AG04449 (cell line): ENCODE measurements at regions of chr10 and their contacts with region 1.

Region 1: GRCh38 chr10:60769406-60769805 is 8.9 kb upstream of the CDK1 start:
- DNase-seq: no peak
- H3K4me3 ChIP-seq: no peak overlapping the region
- CTCF ChIP-seq: no peak

Region 2: DNA sequence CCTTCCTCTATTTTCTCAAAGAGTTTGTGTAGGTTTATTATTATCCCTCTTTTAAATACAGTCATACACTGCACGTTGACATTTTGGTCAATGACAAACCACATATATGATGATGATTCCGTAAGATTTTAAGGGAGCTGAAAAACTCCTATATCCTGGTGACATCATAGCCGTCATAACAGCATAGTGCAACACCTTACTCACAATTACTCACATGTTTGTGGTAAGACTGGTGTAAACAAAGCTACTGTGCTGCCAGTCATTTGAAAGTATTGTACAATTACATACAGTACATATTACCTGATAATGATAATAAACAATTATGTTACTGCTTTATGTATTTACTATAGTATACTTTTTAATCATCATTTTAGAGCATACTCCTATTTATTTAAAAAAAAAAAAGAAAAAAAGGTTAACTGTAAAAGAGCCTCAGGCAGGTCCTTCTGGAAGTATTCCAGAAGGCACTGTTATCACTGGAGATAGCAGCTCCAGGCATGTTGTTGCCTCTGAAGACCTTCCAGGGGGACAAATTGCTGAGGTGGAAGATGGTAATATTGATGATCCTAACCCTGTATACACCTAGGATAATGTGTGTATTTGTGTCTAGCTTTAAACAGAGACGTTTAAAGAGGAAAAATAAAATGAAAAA is 114.5 kb before region 1 on chr10:
- CTCF ChIA-PET with region 1: interaction called, 60 read pairs
- POLR2A ChIA-PET with region 1: no interaction called
- DNase-seq: no peak
- H3K4me3 ChIP-seq: no peak overlapping the region
- CTCF ChIP-seq: no peak

Region 3: DNA sequence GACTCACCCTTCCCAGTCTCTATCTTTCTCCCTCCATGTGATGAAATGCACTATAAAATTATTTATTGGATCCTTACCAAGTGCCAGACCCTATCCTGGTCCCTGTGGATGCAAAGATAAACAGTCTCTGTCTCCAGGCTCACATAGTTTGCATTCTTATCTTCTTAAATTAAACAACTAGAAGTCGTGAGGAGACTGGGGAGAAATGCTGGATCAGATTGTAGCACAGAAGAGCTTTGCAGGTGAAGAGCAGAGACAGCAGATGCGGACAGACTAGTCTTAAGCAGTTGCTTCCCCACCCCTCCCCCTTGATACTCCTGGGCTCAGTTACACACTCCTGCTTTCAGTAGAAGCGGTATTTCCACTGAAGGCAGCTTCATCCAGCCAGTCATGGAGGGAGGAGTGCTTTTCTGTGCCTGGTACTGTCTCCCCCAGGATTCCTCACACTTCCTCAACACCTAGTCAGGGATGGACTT is 11.9 kb before region 1 on chr10:
- CTCF ChIA-PET with region 1: interaction called, 11 read pairs
- POLR2A ChIA-PET with region 1: no interaction called
- DNase-seq: no peak
- H3K4me3 ChIP-seq: no peak overlapping the region
- CTCF ChIP-seq: no peak

Region 4: DNA sequence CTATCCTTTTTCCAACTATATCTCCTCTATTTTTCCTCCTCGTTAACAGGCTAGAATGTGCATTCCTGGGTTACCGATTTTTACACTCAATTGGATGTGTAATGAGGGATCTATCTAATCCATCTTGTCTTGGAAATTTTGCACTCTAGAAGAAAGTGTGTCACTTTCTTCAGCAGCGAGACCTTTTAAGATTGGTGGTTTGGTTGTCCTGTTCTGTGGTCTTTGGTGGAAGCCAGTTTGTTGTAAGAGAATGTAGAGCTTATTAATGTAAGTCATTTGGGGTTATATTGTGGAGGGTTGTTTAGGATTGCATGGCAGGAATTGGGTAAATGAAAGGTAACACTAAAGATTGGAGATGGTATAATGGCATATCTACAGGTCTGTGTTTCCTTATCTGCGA is 25.5 kb after region 1 on chr10:
- CTCF ChIA-PET with region 1: no interaction called
- POLR2A ChIA-PET with region 1: no interaction called
- DNase-seq: no peak
- H3K4me3 ChIP-seq: no peak overlapping the region
- CTCF ChIP-seq: no peak